GM10248 (cell line): ENCODE measurements at regions of chr12 and their contacts with region 1.

Region 1: DNA sequence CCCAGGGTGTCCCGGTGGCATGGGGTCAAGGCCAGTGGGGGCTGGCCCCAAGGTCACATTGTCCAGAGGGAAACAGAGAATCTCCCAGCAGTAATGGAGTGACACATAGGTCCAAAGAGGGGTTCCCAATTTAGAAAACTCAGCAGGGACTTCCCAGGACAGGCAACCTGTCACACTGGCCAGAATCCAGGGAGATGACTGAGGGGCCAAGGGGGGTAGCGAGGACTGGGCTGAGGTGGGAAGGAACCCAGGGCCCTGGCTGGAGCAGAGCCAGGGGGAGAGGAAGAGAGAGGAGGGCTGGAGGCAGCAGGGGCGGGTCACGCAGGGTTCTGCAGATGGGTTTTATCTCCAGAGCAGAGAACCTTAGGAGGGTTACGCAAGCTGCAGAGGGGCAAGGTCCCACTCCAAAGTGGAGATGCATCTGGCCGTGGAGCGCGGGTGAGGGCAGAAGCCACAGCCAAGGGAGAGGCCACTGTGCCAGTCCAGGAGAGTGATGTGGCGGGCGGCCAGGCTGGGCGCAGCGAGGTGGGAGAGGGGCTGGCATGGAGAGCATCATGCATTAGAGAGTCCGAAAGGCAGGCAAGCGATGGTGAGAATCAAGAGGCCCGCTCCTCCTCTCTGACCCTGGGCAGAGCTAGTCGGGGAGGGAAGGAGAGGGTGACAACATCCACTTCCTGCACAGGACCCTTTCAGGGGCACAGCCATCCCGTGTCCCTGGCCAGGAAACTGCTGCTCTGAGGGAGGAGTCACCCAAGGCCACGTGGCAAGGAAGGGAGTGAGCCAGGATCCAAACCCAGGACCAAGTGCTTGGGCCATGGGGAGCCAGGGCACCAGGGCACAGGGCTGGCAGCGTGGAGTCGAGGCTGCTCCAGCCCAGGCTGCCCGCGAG is 29.0 kb downstream of the NCOR2 start:
- DNase-seq: no peak
- CTCF ChIP-seq: no peak

Region 2: GRCh38 chr12:124842073-124842749 is 303.8 kb after region 1 on chr12:
- CTCF ChIA-PET with region 1: no interaction called
- POLR2A ChIA-PET with region 1: interaction called, 11 read pairs
- DNase-seq: no peak
- CTCF ChIP-seq: no peak